Left colon (tissue), 2 donors: ENCODE measurements at regions of chr11 and their contacts with region 1.

Region 1: GRCh38 chr11:25981998-25982397 is 349.9 kb upstream of the ANO3 start:
- DNase-seq: no peak
- ATAC-seq: peak; percentile 51

Region 2: GRCh38 chr11:26134481-26135355 is 152.7 kb after region 1 on chr11:
- intact Hi-C with region 1: loop called in 1 of 2 experiments (anchors 10 kb)
- DNase-seq: no peak
- ATAC-seq: no peak

Region 3: DNA sequence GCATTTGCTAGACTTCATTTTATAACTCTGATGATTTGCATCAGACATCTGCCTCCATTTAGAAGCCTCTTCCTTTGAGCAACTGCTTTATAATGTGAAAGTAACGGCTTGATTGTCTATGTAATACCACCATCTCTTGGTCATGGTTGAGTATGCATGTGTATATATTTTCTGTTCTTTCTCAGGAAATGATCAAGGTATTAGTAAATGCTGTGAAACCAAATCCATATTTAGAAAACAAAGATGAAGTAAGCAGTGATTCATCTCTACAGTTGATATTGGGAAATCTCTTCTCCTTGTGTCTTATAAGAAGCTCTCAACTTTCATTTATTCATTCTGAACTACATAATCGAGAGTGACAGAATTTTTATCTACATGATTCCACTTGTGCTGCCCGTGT is 245.3 kb after region 1 on chr11:
- intact Hi-C with region 1: loop called in 1 of 2 experiments (anchors 5 kb)
- DNase-seq: no peak
- ATAC-seq: no peak

Region 4: DNA sequence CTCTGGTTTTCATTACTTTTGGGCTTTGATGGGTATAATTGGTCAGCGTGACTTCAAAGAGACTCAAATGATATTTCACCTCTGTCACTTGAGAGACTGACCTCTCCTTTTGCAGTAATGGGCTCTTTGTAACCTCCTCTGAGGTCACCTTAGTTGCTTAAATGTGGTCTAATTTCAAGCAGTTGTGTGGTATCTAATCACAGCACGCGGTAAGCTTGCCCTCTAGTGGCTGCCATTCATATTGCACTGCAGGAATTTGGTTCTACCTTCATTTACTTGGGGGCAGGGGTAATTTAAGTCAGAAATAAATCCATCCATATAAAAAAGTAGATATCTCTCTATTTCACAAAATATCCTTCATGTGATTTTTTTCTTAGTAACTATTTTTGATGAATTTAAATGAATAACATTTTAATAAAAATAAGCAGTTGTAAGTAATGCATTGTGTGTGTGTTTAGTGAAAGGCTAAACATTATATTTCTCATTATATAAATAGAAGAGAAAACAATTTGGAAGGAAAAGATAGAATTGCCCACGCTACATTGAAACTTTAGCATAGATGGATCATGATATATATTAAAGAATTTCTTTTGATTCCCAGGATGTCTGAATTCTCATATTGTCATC is 294.9 kb after region 1 on chr11:
- intact Hi-C with region 1: loop called in 1 of 2 experiments (anchors 5 kb)
- DNase-seq: peak in 1 of 2 donors; percentile 45
- ATAC-seq: peak; percentile 59